Natural killer cell (primary cell): ENCODE measurements at regions of chr9 and their contacts with region 1.

Region 1: DNA sequence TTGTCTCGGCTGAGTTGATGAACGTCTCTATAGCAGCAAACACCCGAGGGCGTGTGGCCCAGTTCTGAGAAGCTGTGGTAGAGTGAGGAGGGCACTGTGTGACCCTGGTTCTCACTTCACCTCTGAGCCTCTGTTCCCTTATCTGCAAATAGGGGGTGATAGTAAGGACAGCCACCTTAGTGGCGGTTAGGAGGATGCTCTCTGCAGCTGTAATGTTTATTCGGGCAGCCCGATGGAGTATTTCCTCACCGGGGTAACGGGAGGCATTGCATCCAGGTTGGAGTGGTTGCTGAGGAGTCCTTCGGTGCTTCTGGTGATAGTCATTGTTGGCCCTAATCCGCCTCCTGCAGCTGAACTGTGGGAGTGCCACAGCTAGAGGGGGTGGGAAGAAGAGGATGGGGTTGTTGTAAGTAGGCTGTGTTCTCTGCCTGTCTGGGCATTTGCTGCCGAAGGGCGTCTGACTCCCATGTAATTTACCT is 13.9 kb downstream of the PRRC2B start:
- DNase-seq: peak; percentile 62 to 82
- ATAC-seq: peak; percentile 65 to 85 (median 82)
- H3K4me3 ChIP-seq: peak overlapping the region; percentile 26
- H3K4me3 Mint-ChIP-seq: peak overlapping the region; percentile 82
- H3K27ac ChIP-seq: peak overlapping the region; percentile 92
- H3K27ac Mint-ChIP-seq: peak overlapping the region; percentile 91 to 96
- H3K4me1 ChIP-seq: peaks cover 84% of the 10 kb centered on the region
- H3K4me1 Mint-ChIP-seq: peaks cover 68 to 73% of the 10 kb centered on the region in 2 donors
- H3K27me3 ChIP-seq: no peaks in the 10 kb centered on the region
- H3K27me3 Mint-ChIP-seq: no peaks in the 10 kb centered on the region
- CTCF ChIP-seq: peak; percentile 44

Region 2: DNA sequence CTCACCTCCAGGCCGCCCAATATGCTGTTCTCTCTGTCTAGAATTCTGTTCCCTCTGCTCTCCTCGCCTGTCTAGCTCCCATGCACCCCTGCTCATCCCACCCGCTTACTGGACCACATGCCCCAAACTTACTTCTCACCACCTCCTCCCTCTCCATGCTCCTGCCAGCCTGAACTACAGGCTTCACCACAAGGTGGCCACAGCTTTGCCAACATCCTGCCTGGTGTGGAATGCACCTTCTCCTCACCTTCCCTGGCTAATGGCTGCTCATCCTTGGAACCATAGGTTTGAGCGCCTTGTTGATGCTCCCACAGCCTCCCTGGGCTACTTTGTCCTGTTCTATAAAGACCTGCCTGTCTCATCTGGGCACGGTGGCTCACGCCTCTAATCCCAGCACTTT is 389.1 kb before region 1 on chr9:
- intact Hi-C with region 1: no loop called
- DNase-seq: no peak
- ATAC-seq: no peak
- H3K4me3 ChIP-seq: no peak overlapping the region
- H3K4me3 Mint-ChIP-seq: no peak overlapping the region
- H3K27ac ChIP-seq: no peak overlapping the region
- H3K27ac Mint-ChIP-seq: no peak overlapping the region
- H3K4me1 ChIP-seq: no peaks in the 10 kb centered on the region
- H3K4me1 Mint-ChIP-seq: no peaks in the 10 kb centered on the region
- H3K27me3 ChIP-seq: no peaks in the 10 kb centered on the region
- H3K27me3 Mint-ChIP-seq: peaks cover 2 to 24% of the 10 kb centered on the region in 2 donors
- CTCF ChIP-seq: no peak

Region 3: GRCh38 chr9:131160416-131161112 is 247.2 kb before region 1 on chr9:
- intact Hi-C with region 1: no loop called
- DNase-seq: no peak
- ATAC-seq: no peak
- H3K4me3 ChIP-seq: no peak overlapping the region
- H3K4me3 Mint-ChIP-seq: no peak overlapping the region
- H3K27ac ChIP-seq: no peak overlapping the region
- H3K27ac Mint-ChIP-seq: no peak overlapping the region
- H3K4me1 ChIP-seq: no peaks in the 10 kb centered on the region
- H3K4me1 Mint-ChIP-seq: peaks cover 2% of the 10 kb centered on the region in 2 donors
- H3K27me3 ChIP-seq: no peaks in the 10 kb centered on the region
- H3K27me3 Mint-ChIP-seq: no peaks in the 10 kb centered on the region
- CTCF ChIP-seq: no peak

Region 4: GRCh38 chr9:131279927-131280570 is 127.7 kb before region 1 on chr9:
- intact Hi-C with region 1: no loop called
- DNase-seq: no peak
- ATAC-seq: no peak
- H3K4me3 ChIP-seq: no peak overlapping the region
- H3K4me3 Mint-ChIP-seq: no peak overlapping the region
- H3K27ac ChIP-seq: no peak overlapping the region
- H3K27ac Mint-ChIP-seq: no peak overlapping the region
- H3K4me1 ChIP-seq: peaks cover 35% of the 10 kb centered on the region
- H3K4me1 Mint-ChIP-seq: peaks cover 23 to 47% of the 10 kb centered on the region in 2 donors
- H3K27me3 ChIP-seq: peaks cover 5% of the 10 kb centered on the region
- H3K27me3 Mint-ChIP-seq: peaks cover 0 to 7% of the 10 kb centered on the region in 2 donors
- CTCF ChIP-seq: no peak

Region 5: GRCh38 chr9:131349881-131350563 is 57.7 kb before region 1 on chr9:
- intact Hi-C with region 1: loop called (anchors 5 kb)
- DNase-seq: peak; percentile 80 to 91
- ATAC-seq: peak; percentile 91 to 99 (median 98)
- H3K4me3 ChIP-seq: no peak overlapping the region
- H3K4me3 Mint-ChIP-seq: no peak overlapping the region
- H3K27ac ChIP-seq: no peak overlapping the region
- H3K27ac Mint-ChIP-seq: no peak overlapping the region
- H3K4me1 ChIP-seq: peaks cover 8% of the 10 kb centered on the region
- H3K4me1 Mint-ChIP-seq: peaks cover 0 to 8% of the 10 kb centered on the region in 2 donors
- H3K27me3 ChIP-seq: no peaks in the 10 kb centered on the region
- H3K27me3 Mint-ChIP-seq: peaks cover 0 to 3% of the 10 kb centered on the region in 2 donors
- CTCF ChIP-seq: peak; percentile 80

Region 6: DNA sequence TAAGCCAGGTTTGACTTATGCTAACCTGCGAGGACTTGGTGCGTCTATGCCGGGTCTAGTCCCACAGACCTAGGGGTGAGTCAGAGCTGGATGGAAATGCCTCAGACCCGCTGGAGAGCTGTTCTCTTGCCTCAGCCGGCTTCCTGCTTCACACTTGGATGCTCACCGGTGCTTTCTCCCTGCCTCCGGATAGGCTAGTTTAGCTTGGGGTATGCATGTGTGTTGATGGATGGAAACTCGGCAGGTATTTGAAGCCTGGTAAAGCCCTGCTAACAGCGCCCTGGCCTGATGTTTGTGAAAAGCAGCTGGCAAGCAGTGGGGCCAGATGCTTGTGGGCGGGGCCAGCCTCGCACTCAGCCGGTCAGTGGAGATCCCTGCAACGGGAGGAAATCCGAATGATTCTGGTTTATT is 15.4 kb after region 1 on chr9:
- intact Hi-C with region 1: loop called (anchors 2 kb)
- DNase-seq: no peak
- ATAC-seq: no peak
- H3K4me3 ChIP-seq: no peak overlapping the region
- H3K4me3 Mint-ChIP-seq: no peak overlapping the region
- H3K27ac ChIP-seq: no peak overlapping the region
- H3K27ac Mint-ChIP-seq: peak overlapping the region; percentile 41 to 66
- H3K4me1 ChIP-seq: peaks cover 71% of the 10 kb centered on the region
- H3K4me1 Mint-ChIP-seq: peaks cover 66 to 76% of the 10 kb centered on the region in 2 donors
- H3K27me3 ChIP-seq: no peaks in the 10 kb centered on the region
- H3K27me3 Mint-ChIP-seq: no peaks in the 10 kb centered on the region
- CTCF ChIP-seq: no peak

Region 7: GRCh38 chr9:131433307-131433854 is 25.6 kb after region 1 on chr9:
- intact Hi-C with region 1: no loop called
- DNase-seq: no peak
- ATAC-seq: no peak
- H3K4me3 ChIP-seq: no peak overlapping the region
- H3K4me3 Mint-ChIP-seq: no peak overlapping the region
- H3K27ac ChIP-seq: no peak overlapping the region
- H3K27ac Mint-ChIP-seq: peak overlapping the region in 1 of 2 donors; percentile 14
- H3K4me1 ChIP-seq: peaks cover 19% of the 10 kb centered on the region
- H3K4me1 Mint-ChIP-seq: peaks cover 21 to 22% of the 10 kb centered on the region in 2 donors
- H3K27me3 ChIP-seq: no peaks in the 10 kb centered on the region
- H3K27me3 Mint-ChIP-seq: no peaks in the 10 kb centered on the region
- CTCF ChIP-seq: no peak

Region 8: GRCh38 chr9:131668439-131669268 is 260.9 kb after region 1 on chr9:
- intact Hi-C with region 1: loop called (anchors 5 kb)
- DNase-seq: peak; percentile 72 to 85
- ATAC-seq: peak; percentile 67 to 77 (median 72)
- H3K4me3 ChIP-seq: no peak overlapping the region
- H3K4me3 Mint-ChIP-seq: peak overlapping the region; percentile 66
- H3K27ac ChIP-seq: peak overlapping the region; percentile 92
- H3K27ac Mint-ChIP-seq: peak overlapping the region; percentile 98 to 99
- H3K4me1 ChIP-seq: peaks cover 84% of the 10 kb centered on the region
- H3K4me1 Mint-ChIP-seq: peaks cover 89 to 90% of the 10 kb centered on the region in 2 donors
- H3K27me3 ChIP-seq: no peaks in the 10 kb centered on the region
- H3K27me3 Mint-ChIP-seq: no peaks in the 10 kb centered on the region
- CTCF ChIP-seq: no peak